CD14-positive monocyte (primary cell): ENCODE measurements at regions of chr15 and their contacts with region 1.

Region 1: DNA sequence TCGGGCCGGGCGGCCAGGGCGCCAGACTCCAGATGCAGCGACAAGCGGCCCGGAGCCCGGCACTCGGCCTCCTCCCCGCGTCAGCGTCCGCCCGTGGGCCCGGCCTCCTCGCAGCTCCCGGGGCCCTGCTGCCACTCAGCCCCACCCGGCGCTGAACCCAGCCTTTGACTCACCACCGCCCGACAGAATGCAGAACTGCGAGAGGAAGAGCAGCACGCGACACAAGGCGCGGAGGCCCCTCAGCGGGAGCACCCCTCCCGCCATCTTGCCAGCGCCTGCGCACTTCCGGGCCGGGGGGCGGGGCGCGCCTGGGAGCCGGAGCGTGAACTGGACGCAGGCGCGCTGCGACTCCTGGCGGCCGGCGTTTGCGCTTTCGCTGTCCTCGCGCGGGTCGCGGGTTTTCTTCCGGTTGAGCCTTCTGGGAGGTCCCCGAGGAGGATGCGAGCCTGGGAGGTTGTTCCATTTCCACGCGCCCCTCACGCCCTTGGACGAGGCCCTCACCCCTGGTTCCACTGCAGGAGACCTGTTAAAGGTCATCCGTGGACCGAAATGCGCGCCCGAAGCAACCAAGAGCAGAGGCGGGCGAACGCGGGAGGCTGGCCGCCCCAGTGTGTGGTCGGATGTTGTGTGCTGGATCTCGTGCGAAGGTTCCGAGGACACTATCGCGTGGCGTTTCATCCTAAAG is at the start of gene TM2D3:
- DNase-seq: peak; percentile 96 to 98 (median 98)
- H3K4me3 ChIP-seq: peak within 1 kb of the TSS; percentile 70 to 80 (median 76)
- H3K4me3 Mint-ChIP-seq: peak within 1 kb of the TSS; percentile 80 to 94
- H3K27ac ChIP-seq: peak within 1 kb of the TSS; percentile 99 to 100
- H3K27ac Mint-ChIP-seq: peak within 1 kb of the TSS; percentile 98 to 100 (median 99)
- H3K4me1 ChIP-seq: peaks cover 43 to 50% of the 10 kb centered on the region in 2 donors
- H3K4me1 Mint-ChIP-seq: peaks cover 42% of the 10 kb centered on the region
- H3K27me3 ChIP-seq: no peaks in the 10 kb centered on the region
- H3K27me3 Mint-ChIP-seq: no peaks in the 10 kb centered on the region
- CTCF ChIP-seq: peak; percentile 88
- polyA plus RNA-seq, gene TM2D3: 22.9 to 54.6 (median 26.5) TPM

Region 2: GRCh38 chr15:100602064-100602822 is 1050.0 kb before region 1 on chr15 and contains the starts of genes ASB7 and LINS1:
- intact Hi-C with region 1: loop called in 1 of 2 experiments (anchors 10 kb)
- DNase-seq: peak; percentile 100
- H3K4me3 ChIP-seq: peak within 1 kb of the TSS; percentile 89 to 97 (median 97)
- H3K4me3 Mint-ChIP-seq: no peak within 1 kb of the TSS
- H3K27ac ChIP-seq: peak within 1 kb of the TSS; percentile 68 to 86
- H3K27ac Mint-ChIP-seq: peak within 1 kb of the TSS in 6 of 7 donors; percentile 50 to 97 (median 92)
- H3K4me1 ChIP-seq: peaks cover 18 to 38% of the 10 kb centered on the region in 2 donors
- H3K4me1 Mint-ChIP-seq: peaks cover 26% of the 10 kb centered on the region
- H3K27me3 ChIP-seq: no peaks in the 10 kb centered on the region
- H3K27me3 Mint-ChIP-seq: peaks cover 0 to 1% (median 0%) of the 10 kb centered on the region in 3 donors
- CTCF ChIP-seq: no peak
- polyA plus RNA-seq, gene ASB7: 5.3 to 9.8 (median 7.6) TPM
- polyA plus RNA-seq, gene LINS1: 4.2 to 8.8 (median 7.6) TPM

Region 3: DNA sequence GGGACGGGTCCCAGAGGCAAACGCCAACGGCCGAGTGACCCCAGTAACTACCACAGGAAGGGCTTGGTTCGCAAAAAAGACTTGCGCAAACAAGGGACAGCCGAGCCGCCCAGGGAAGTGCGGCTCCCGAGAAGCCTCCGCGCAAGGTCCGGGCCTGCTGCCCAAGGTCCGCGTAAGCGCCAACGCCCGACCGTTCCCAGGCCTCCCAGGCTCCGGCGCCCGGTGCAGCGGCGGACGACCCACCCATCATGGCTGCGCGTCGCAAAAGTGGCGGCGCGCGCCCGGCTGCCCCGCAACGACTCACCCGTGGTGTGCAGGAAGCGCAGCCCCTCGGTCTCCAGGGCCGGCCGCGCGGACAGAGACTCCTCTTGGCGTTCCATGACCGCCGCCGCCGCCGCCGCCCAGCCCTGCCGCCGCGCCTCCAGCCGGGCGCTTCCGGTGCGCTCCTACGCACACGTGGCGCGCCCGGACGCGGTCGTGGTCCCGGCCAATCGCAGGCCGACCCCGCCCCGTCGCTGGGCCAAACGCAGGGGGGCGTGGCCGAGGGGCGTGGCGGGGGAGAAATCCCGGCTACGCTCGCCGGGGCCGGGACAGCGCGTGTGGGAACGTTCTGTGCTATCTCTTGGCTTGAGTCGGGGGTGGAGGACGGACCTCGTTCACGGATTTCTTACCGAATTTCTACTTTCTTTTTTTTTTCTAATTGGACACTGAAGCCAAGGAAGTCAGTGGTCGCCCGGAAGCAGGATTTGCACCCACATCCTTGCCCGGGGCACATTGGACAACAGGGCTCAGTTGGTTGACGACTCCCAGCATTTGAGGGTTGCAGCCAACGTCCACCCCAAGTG is 375.0 kb before region 1 on chr15 and contains the start of gene SELENOS:
- intact Hi-C with region 1: loop called in 1 of 2 experiments (anchors 5 kb)
- DNase-seq: peak; percentile 84 to 88 (median 88)
- H3K4me3 ChIP-seq: peak within 1 kb of the TSS; percentile 78 to 89 (median 80)
- H3K4me3 Mint-ChIP-seq: peak within 1 kb of the TSS; percentile 96 to 98
- H3K27ac ChIP-seq: peak within 1 kb of the TSS; percentile 91 to 92
- H3K27ac Mint-ChIP-seq: peak within 1 kb of the TSS; percentile 96 to 98 (median 98)
- H3K4me1 ChIP-seq: peaks cover 17 to 20% of the 10 kb centered on the region in 2 donors
- H3K4me1 Mint-ChIP-seq: peaks cover 20% of the 10 kb centered on the region
- H3K27me3 ChIP-seq: no peaks in the 10 kb centered on the region
- H3K27me3 Mint-ChIP-seq: peaks cover 0 to 5% (median 0%) of the 10 kb centered on the region in 3 donors
- CTCF ChIP-seq: no peak
- polyA plus RNA-seq, gene SELENOS: 40.2 to 70.2 (median 51.6) TPM

Region 4: DNA sequence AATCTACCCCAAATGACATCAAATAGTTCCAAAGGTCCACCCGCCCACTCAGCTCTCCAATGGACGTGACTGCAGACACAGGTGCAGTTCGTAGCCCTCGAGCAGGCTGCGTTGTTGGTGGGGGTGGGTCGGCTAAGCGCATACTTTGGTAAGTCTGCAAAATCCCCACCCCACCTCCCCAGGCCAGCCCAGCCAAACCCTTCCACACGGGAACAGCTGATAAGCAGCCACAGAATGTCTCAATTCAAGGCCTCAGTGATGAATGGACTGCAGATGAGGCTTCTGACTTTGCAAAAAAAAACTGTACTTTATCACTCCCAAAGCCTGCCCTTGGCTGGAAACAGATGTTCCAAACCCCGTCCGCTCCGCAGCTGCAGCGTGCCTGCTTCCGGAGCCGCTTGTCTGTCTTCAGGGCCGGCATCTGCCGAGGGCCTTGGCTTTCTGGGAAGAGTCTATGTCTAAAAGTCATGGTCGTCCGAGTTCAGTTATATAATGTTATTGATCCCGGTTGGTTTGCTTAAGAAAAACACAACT is 200.9 kb before region 1 on chr15:
- intact Hi-C with region 1: loop called (anchors 5 to 10 kb)
- DNase-seq: peak; percentile 21 to 46 (median 39)
- H3K4me3 ChIP-seq: peak overlapping the region in 1 of 3 experiments; percentile 48
- H3K4me3 Mint-ChIP-seq: peak overlapping the region; percentile 63 to 86
- H3K27ac ChIP-seq: peak overlapping the region; percentile 35 to 51
- H3K27ac Mint-ChIP-seq: peak overlapping the region; percentile 70 to 89 (median 85)
- H3K4me1 ChIP-seq: peaks cover 49 to 54% of the 10 kb centered on the region in 2 donors
- H3K4me1 Mint-ChIP-seq: peaks cover 61% of the 10 kb centered on the region
- H3K27me3 ChIP-seq: no peaks in the 10 kb centered on the region
- H3K27me3 Mint-ChIP-seq: peaks cover 2 to 6% (median 5%) of the 10 kb centered on the region in 3 donors
- CTCF ChIP-seq: no peak

Region 5: GRCh38 chr15:101664303-101664913 is 12.2 kb after region 1 on chr15:
- intact Hi-C with region 1: no loop called
- DNase-seq: no peak
- H3K4me3 ChIP-seq: no peak overlapping the region
- H3K4me3 Mint-ChIP-seq: no peak overlapping the region
- H3K27ac ChIP-seq: no peak overlapping the region
- H3K27ac Mint-ChIP-seq: no peak overlapping the region
- H3K4me1 ChIP-seq: peaks cover 0 to under 1% of the 10 kb centered on the region in 2 donors
- H3K4me1 Mint-ChIP-seq: peaks cover 7% of the 10 kb centered on the region
- H3K27me3 ChIP-seq: no peaks in the 10 kb centered on the region
- H3K27me3 Mint-ChIP-seq: no peaks in the 10 kb centered on the region
- CTCF ChIP-seq: peak; percentile 16

Region 6: DNA sequence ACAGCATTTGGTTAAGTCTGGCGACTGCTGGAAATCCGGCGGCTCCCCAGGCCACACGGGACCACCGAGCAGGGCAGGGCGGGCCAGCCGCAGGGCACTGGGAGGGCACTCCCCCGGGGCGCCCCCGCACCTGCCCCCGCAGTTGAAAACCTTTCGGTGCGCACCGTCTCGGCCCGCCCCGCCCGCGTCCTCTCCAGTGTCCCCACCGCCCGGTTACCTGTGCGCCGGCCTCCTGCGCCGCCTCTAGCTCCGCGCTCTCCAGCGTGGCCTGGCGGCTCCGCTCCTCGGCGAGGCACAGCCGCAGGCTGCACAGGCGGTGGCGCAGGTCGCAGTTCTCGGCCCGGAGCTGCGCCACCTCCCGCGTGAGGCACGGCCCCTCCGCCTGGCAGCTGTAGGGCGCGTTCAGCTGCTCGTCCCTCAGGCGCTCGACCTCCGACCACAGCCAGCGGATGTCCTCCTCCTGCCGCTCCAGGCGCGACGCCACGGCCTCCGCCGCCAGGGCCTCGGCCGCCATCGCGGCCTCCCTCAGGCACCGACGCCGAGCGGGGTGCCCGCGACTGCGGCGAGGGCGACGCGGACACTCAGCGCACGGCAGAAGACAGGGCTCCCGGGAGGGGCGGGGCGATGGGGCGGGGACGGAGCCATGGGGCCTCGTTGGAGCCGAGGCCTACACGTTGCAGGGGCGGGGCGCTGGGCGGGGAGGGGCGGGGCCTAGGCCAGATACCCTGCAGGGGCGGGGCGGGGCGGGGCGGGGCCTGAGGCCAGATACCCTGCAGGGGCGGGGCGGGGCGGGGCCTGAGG is 71.8 kb after region 1 on chr15 and contains the start of gene TARS3:
- intact Hi-C with region 1: loop called in 1 of 2 experiments (anchors 5 kb)
- DNase-seq: peak; percentile 89 to 93 (median 90)
- H3K4me3 ChIP-seq: peak within 1 kb of the TSS; percentile 42 to 81 (median 75)
- H3K4me3 Mint-ChIP-seq: peak within 1 kb of the TSS; percentile 74 to 94
- H3K27ac ChIP-seq: peak within 1 kb of the TSS; percentile 42 to 80
- H3K27ac Mint-ChIP-seq: peak within 1 kb of the TSS in 5 of 7 donors; percentile 11 to 90 (median 64)
- H3K4me1 ChIP-seq: peaks cover 13 to 14% of the 10 kb centered on the region in 2 donors
- H3K4me1 Mint-ChIP-seq: peaks cover 15% of the 10 kb centered on the region
- H3K27me3 ChIP-seq: peaks cover 0 to 2% of the 10 kb centered on the region in 2 donors
- H3K27me3 Mint-ChIP-seq: peaks cover 0 to 3% (median 2%) of the 10 kb centered on the region in 3 donors
- CTCF ChIP-seq: no peak
- polyA plus RNA-seq, gene TARS3: 1.3 to 2.4 (median 1.8) TPM